CD4-positive, alpha-beta memory T cell (primary cell): ENCODE measurements at regions of chr17 and their contacts with region 1.

Region 1: DNA sequence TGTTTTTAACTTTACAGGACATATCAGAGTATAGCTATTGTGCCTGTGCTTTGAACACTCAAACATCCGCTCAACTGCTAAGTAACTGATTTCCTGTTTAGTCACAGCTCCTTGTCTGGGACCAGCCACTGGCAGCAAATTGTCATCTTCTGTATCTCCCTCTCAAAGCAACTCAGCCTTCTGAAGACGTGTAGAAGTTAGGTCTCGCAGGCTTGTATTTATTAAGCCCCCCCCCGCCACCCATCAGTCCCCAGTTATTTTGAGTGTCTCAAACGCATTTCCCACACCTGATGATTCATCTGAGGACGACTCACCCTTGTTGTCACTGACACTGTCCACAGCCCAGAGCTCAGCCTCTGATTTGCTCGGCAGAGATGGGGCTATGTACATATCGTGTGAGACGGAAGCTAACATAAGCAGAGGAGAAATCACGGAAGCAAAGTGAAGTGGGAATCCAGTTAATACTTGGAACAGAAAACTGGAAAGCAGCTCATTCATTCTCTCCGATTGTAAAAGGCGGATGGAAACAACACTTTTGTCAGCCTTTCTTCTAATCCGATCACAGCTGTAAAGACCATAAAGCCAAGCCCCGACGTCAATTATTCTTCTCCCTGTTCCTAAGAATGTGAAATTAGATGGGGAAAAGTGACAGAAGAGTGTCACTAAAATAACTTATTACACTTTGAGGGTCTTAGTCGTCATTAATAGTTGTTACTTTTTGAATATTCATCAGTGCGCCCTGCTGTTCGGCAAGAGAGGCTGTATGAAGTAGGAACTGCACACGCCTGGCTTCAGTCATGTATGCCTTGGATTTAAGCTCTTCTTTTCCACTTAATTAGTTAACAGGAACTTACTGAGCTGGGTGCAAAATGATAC is 64.2 kb downstream of the PITPNC1 start:
- DNase-seq: peak; percentile 80 to 97 (median 86)
- H3K4me3 ChIP-seq: peak overlapping the region; percentile 4 to 48
- H3K4me3 Mint-ChIP-seq: peak overlapping the region; percentile 79 to 90 (median 86)
- H3K27ac ChIP-seq: peak overlapping the region; percentile 77
- H3K27ac Mint-ChIP-seq: peak overlapping the region; percentile 87 to 99 (median 98)
- H3K4me1 ChIP-seq: peaks cover 91% of the 10 kb centered on the region
- H3K4me1 Mint-ChIP-seq: peaks cover 48 to 92% (median 72%) of the 10 kb centered on the region in 4 donors
- H3K27me3 ChIP-seq: no peaks in the 10 kb centered on the region
- H3K27me3 Mint-ChIP-seq: no peaks in the 10 kb centered on the region

Region 2: GRCh38 chr17:67366193-67367157 is 74.8 kb before region 1 on chr17 and contains the start of gene PSMD12:
- CTCF ChIA-PET with region 1: no interaction called
- POLR2A ChIA-PET with region 1: interaction called, 11 read pairs
- intact Hi-C with region 1: no loop called
- DNase-seq: peak; percentile 90 to 95 (median 92)
- H3K4me3 ChIP-seq: peak within 1 kb of the TSS; percentile 88 to 98
- H3K4me3 Mint-ChIP-seq: peak within 1 kb of the TSS; percentile 90 to 99 (median 98)
- H3K27ac ChIP-seq: peak within 1 kb of the TSS; percentile 94
- H3K27ac Mint-ChIP-seq: peak within 1 kb of the TSS; percentile 90 to 99 (median 98)
- H3K4me1 ChIP-seq: peaks cover 45% of the 10 kb centered on the region
- H3K4me1 Mint-ChIP-seq: peaks cover 27 to 51% (median 42%) of the 10 kb centered on the region in 4 donors
- H3K27me3 ChIP-seq: no peaks in the 10 kb centered on the region
- H3K27me3 Mint-ChIP-seq: no peaks in the 10 kb centered on the region
- total RNA-seq, gene PSMD12: 46.9 to 48.8 TPM

Region 3: DNA sequence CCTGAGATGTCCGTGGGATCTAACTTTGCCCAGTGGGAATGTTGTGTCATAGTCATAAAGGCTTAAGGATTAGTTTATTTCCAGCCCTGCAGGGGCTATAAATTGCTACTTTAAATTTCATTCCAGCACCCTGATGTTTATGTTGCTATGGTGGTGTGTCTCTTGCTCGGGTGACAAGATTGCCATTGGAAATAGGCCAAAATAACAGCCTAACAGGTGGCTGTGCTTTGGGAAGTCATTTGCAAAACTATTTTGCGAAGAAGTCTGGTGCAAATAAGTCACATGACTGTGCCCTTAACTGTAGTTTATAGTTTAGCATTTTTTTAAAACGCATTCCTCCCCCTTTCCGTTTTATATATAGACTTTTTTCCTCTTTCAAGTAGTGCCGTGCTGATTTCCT is 41.1 kb before region 1 on chr17:
- CTCF ChIA-PET with region 1: interaction called, 4 read pairs
- POLR2A ChIA-PET with region 1: interaction called, 18 read pairs
- intact Hi-C with region 1: no loop called
- DNase-seq: peak; percentile 30 to 52 (median 43)
- H3K4me3 ChIP-seq: no peak overlapping the region
- H3K4me3 Mint-ChIP-seq: peak overlapping the region in 7 of 8 donors; percentile 46 to 87 (median 71)
- H3K27ac ChIP-seq: no peak overlapping the region
- H3K27ac Mint-ChIP-seq: peak overlapping the region; percentile 47 to 96 (median 88)
- H3K4me1 ChIP-seq: peaks cover 61% of the 10 kb centered on the region
- H3K4me1 Mint-ChIP-seq: peaks cover 41 to 81% (median 55%) of the 10 kb centered on the region in 4 donors
- H3K27me3 ChIP-seq: no peaks in the 10 kb centered on the region
- H3K27me3 Mint-ChIP-seq: no peaks in the 10 kb centered on the region

Region 4: DNA sequence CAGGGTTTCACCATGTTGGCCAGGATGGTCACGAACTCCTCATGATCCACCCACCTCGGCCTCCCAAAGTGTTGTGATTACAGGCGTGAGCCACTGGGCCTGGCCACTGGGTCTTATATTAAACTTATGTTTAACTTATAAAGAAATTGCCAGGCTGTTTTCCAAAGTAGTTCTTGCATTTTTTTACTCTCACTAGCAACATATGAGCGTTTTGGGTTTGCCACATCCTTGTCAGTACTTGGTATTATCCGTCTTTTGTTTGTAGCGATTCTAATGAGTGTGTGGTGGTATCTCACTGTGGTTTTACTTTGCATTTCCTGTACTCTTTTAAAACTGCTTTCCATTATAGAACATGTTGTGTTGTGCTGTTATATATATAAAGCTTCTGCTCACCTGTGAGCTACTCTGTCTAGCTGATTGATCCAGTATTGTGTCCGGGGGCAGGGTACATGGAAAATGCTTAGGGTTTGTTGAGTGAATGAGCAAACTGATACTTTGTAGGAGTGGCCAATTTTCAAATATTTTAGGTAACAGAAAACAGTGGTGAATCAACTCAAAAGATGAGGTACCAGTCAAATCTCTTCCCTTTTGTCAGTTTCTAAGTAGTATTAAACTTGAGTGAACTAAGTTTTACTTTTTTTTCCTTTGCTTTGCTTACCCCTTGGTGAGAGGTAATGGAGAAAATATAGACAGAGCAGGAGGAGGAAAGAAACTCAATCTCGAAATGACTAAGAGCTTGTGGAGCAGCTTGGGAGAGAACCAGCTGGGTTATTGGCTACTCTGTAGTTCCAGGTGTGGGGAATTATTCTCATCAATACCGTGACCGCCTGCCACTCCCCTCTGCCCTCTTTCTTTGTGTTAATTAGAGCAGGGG is 11.6 kb after region 1 on chr17:
- CTCF ChIA-PET with region 1: interaction called, 44 read pairs
- POLR2A ChIA-PET with region 1: interaction called, 274 read pairs
- intact Hi-C with region 1: loop called (anchors 1 kb)
- DNase-seq: peak; percentile 63 to 82 (median 75)
- H3K4me3 ChIP-seq: peak overlapping the region in 1 of 2 donors; percentile 17
- H3K4me3 Mint-ChIP-seq: peak overlapping the region; percentile 71 to 86 (median 80)
- H3K27ac ChIP-seq: peak overlapping the region; percentile 34
- H3K27ac Mint-ChIP-seq: peak overlapping the region; percentile 89 to 96 (median 96)
- H3K4me1 ChIP-seq: peaks cover 86% of the 10 kb centered on the region
- H3K4me1 Mint-ChIP-seq: peaks cover 56 to 100% (median 79%) of the 10 kb centered on the region in 4 donors
- H3K27me3 ChIP-seq: no peaks in the 10 kb centered on the region
- H3K27me3 Mint-ChIP-seq: no peaks in the 10 kb centered on the region

Region 5: GRCh38 chr17:67469208-67469895 is 28.1 kb after region 1 on chr17:
- CTCF ChIA-PET with region 1: interaction called, 198 read pairs
- POLR2A ChIA-PET with region 1: interaction called, 170 read pairs
- intact Hi-C with region 1: no loop called
- DNase-seq: peak in 2 of 5 donors; percentile 26 to 52
- H3K4me3 ChIP-seq: peak overlapping the region; percentile 23 to 30
- H3K4me3 Mint-ChIP-seq: peak overlapping the region; percentile 75 to 85 (median 79)
- H3K27ac ChIP-seq: peak overlapping the region; percentile 29
- H3K27ac Mint-ChIP-seq: peak overlapping the region; percentile 81 to 91 (median 90)
- H3K4me1 ChIP-seq: peaks cover 65% of the 10 kb centered on the region
- H3K4me1 Mint-ChIP-seq: peaks cover 49 to 81% (median 62%) of the 10 kb centered on the region in 4 donors
- H3K27me3 ChIP-seq: no peaks in the 10 kb centered on the region
- H3K27me3 Mint-ChIP-seq: no peaks in the 10 kb centered on the region